B cell (primary cell): ENCODE measurements at regions of chr4 and their contacts with region 1.

Region 1: GRCh38 chr4:163611784-163612445 is 117.4 kb downstream of the TMA16 start:
- DNase-seq: no peak
- ATAC-seq: peak; percentile 35
- H3K4me3 ChIP-seq: peak overlapping the region; percentile 74 to 96 (median 87)
- H3K4me3 Mint-ChIP-seq: peak overlapping the region; percentile 91
- H3K27ac ChIP-seq: peak overlapping the region; percentile 80 to 88
- H3K27ac Mint-ChIP-seq: peak overlapping the region; percentile 87
- H3K4me1 ChIP-seq: peaks cover 39 to 42% of the 10 kb centered on the region in 2 donors
- H3K4me1 Mint-ChIP-seq: peaks cover 50% of the 10 kb centered on the region
- H3K27me3 ChIP-seq: no peaks in the 10 kb centered on the region
- H3K27me3 Mint-ChIP-seq: no peaks in the 10 kb centered on the region
- CTCF ChIP-seq: no peak

Region 2: DNA sequence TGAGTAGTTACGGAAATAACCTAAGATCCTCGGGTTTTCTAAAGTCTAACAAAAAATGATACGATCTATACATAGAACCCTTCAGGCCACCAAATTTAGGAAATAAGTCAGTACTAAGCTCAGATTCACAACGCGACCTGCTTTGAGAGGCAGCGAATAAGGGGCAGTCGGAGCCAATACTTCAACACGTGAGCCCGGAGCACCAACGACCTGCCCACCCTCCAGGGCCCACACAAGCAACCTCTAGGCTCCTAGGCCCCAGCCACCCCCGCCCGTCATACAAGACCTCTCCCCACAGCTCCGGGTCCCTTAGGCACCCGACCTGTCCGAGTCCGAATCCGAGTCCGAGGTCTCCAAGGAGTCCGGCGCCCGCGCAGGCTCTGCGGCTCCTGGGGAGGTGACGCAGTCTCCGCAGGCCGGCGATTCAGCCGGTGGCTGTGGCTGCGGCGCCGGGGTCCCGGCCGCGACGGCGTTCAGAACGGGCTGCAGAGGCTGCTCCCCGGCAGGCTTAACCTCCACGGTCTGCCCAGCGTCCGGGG is 445.8 kb before region 1 on chr4:
- CTCF ChIA-PET with region 1: no interaction called
- POLR2A ChIA-PET with region 1: no interaction called
- intact Hi-C with region 1: loop called (anchors 10 kb)
- DNase-seq: peak; percentile 78
- ATAC-seq: peak; percentile 56
- H3K4me3 ChIP-seq: peak overlapping the region; percentile 73 to 86 (median 83)
- H3K4me3 Mint-ChIP-seq: peak overlapping the region; percentile 97
- H3K27ac ChIP-seq: peak overlapping the region; percentile 91 to 94
- H3K27ac Mint-ChIP-seq: peak overlapping the region; percentile 98
- H3K4me1 ChIP-seq: peaks cover 15 to 18% of the 10 kb centered on the region in 2 donors
- H3K4me1 Mint-ChIP-seq: peaks cover 39% of the 10 kb centered on the region
- H3K27me3 ChIP-seq: no peaks in the 10 kb centered on the region
- H3K27me3 Mint-ChIP-seq: no peaks in the 10 kb centered on the region
- CTCF ChIP-seq: no peak

Region 3: DNA sequence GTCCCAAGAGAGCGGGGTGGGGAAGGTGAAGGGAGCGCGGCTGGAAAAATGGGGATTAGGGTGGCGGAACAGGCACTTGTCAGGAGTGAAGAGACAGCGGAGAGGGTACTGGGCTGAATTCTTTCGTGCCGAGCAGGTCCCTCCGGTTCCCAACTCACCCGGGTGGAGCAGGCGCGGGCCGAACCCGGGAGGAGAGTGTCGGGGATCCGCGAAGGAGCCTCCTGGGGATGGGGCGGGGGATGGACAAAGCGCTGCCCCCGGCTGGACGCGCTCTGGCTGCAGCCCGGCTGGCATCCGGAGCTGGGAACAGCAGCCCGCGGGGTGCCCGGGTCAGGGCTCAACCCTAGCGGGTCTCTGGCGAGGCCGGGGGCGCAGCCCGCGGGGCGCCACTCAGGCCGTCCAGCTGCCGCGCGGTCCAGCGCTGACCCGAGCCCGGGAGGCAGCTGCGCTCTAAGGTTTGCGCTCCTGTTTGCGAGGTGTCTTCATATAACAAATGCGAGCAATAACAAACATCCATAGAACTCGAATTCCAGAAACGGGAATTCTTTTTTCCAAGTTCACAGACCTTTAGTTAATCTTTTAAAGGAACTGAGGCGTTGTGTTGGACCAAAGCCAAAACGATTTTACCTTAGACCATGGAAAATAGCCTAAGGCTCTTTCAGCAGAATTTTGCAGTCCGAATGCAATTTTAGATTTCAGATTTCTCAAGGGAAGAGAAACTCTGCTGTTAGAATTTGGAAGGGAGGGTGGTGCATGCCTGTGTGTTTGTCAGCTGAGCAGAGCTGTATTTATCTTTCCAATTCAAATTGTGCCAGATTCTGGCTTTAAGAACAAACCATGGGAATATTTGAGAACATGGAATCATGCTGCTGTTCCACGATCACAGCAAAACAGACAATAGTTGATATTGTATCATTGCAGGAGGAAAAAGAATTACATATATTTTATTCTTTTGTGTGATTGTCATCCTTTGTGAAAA is 267.5 kb before region 1 on chr4:
- CTCF ChIA-PET with region 1: no interaction called
- POLR2A ChIA-PET with region 1: no interaction called
- intact Hi-C with region 1: no loop called
- DNase-seq: no peak
- ATAC-seq: no peak
- H3K4me3 ChIP-seq: no peak overlapping the region
- H3K4me3 Mint-ChIP-seq: no peak overlapping the region
- H3K27ac ChIP-seq: no peak overlapping the region
- H3K27ac Mint-ChIP-seq: no peak overlapping the region
- H3K4me1 ChIP-seq: peaks cover 0 to 8% of the 10 kb centered on the region in 2 donors
- H3K4me1 Mint-ChIP-seq: peaks cover 7% of the 10 kb centered on the region
- H3K27me3 ChIP-seq: peaks cover 0 to 17% (median 11%) of the 10 kb centered on the region in 4 experiments
- H3K27me3 Mint-ChIP-seq: peaks cover 40% of the 10 kb centered on the region
- CTCF ChIP-seq: no peak

Region 4: DNA sequence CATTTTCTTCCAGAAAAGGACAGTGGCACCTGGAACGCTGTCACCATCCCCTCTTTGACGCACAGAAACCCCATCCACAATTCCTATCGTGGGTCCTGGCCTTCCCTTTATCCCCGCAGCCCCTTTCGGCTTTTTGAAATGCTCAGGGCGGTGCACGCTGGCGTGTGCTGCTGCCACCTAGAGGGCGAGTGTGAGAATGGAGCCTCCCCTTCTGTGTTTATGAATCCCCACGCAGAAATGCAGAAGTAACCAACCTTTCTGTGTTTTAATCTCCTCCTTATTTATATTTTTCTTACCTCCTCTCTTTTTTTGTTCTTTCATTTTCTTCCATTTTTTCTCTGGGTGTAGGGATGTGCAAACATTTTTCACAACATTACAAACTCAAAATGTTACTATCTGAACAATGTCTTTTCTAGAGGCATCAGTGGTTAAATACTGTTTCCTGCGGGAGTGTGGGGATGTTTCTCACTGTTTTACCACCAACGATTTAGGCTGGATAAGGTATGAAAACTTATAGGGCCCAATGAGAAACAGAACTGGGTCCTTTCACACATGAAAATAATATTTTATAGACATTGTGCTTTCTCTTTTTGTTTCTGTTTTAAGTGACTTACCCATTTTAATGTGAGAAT is 67.4 kb before region 1 on chr4:
- CTCF ChIA-PET with region 1: interaction called, 94 read pairs
- POLR2A ChIA-PET with region 1: no interaction called
- intact Hi-C with region 1: no loop called
- DNase-seq: peak; percentile 84
- ATAC-seq: peak; percentile 88
- H3K4me3 ChIP-seq: no peak overlapping the region
- H3K4me3 Mint-ChIP-seq: no peak overlapping the region
- H3K27ac ChIP-seq: peak overlapping the region; percentile 17 to 58
- H3K27ac Mint-ChIP-seq: no peak overlapping the region
- H3K4me1 ChIP-seq: peaks cover 27 to 28% of the 10 kb centered on the region in 2 donors
- H3K4me1 Mint-ChIP-seq: peaks cover 23% of the 10 kb centered on the region
- H3K27me3 ChIP-seq: no peaks in the 10 kb centered on the region
- H3K27me3 Mint-ChIP-seq: no peaks in the 10 kb centered on the region
- CTCF ChIP-seq: peak; percentile 95

Region 5: DNA sequence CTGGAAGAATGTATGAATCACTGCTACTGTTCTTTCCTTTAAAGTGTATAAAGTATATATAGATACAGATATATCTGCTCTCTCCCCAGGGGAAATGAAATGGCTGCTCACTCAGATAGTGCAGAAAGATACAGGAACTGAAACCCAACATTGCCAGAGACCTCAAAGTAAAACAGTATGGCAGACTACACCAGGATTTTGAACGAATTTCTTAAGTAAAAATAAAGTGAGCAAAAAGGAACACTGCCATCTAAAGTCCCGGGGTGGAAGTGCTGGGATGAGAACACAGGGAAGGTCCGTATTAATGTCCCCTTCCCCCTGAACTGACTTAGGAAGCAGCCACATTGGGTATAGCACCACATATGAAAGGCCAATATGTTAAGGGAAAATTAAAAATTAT is 24.0 kb before region 1 on chr4:
- CTCF ChIA-PET with region 1: interaction called, 31 read pairs
- POLR2A ChIA-PET with region 1: interaction called, 7 read pairs
- intact Hi-C with region 1: loop called (anchors 1 kb)
- DNase-seq: peak; percentile 85
- ATAC-seq: peak; percentile 81
- H3K4me3 ChIP-seq: peak overlapping the region in 1 of 5 experiments; percentile 37
- H3K4me3 Mint-ChIP-seq: peak overlapping the region; percentile 55
- H3K27ac ChIP-seq: peak overlapping the region; percentile 35 to 56
- H3K27ac Mint-ChIP-seq: peak overlapping the region; percentile 83
- H3K4me1 ChIP-seq: peaks cover 63 to 66% of the 10 kb centered on the region in 2 donors
- H3K4me1 Mint-ChIP-seq: peaks cover 69% of the 10 kb centered on the region
- H3K27me3 ChIP-seq: no peaks in the 10 kb centered on the region
- H3K27me3 Mint-ChIP-seq: no peaks in the 10 kb centered on the region
- CTCF ChIP-seq: peak; percentile 85

Region 6: DNA sequence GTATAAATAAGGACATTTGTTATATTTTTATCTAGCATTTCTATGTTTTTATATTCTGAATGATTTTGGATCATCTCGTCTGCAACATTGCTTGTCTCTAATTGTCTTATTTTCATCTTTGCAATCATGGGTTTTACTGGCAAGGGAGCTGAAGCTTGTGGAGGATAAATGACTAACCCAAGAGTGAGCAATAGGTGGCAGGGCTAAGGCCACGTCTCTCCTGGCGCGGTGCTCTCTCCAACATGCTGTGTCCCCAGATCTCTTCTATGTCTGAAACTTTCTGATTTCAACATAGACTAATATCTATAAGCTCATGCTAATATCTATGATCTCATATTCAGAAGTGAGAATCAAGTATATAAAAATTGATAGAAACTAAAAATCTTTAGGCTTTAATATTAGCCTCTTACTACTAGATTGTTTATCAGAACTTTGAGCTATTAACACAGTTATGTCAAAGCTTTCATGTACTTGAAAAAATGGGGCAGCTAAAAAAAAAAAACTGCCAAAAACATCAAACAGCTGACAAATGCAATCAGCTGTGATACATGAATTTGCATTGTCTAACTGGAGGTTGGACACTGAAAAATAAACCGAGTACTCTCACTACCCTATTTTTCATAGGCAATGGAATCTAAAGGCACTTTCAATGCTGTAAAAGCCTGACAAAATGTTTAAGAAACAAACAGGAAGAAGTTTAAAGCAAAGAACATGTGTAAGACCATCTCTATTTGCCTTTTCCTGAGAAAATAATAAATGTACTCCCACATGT is 51.7 kb after region 1 on chr4:
- CTCF ChIA-PET with region 1: interaction called, 82 read pairs
- POLR2A ChIA-PET with region 1: interaction called, 39 read pairs
- intact Hi-C with region 1: loop called (anchors 1 kb)
- DNase-seq: peak; percentile 84
- ATAC-seq: peak; percentile 71
- H3K4me3 ChIP-seq: peak overlapping the region in 3 of 5 experiments; percentile 6 to 48 (median 32)
- H3K4me3 Mint-ChIP-seq: peak overlapping the region; percentile 84
- H3K27ac ChIP-seq: peak overlapping the region; percentile 93 to 94
- H3K27ac Mint-ChIP-seq: peak overlapping the region; percentile 98
- H3K4me1 ChIP-seq: peaks cover 69 to 72% of the 10 kb centered on the region in 2 donors
- H3K4me1 Mint-ChIP-seq: peaks cover 75% of the 10 kb centered on the region
- H3K27me3 ChIP-seq: no peaks in the 10 kb centered on the region
- H3K27me3 Mint-ChIP-seq: no peaks in the 10 kb centered on the region
- CTCF ChIP-seq: no peak

Region 7: GRCh38 chr4:163755013-163755412 is 143.1 kb after region 1 on chr4:
- CTCF ChIA-PET with region 1: interaction called, 4 read pairs
- POLR2A ChIA-PET with region 1: no interaction called
- intact Hi-C with region 1: loop called (anchors 10 kb)
- DNase-seq: peak; percentile 56
- ATAC-seq: peak; percentile 54
- H3K4me3 ChIP-seq: peak overlapping the region in 1 of 5 experiments; percentile 8
- H3K4me3 Mint-ChIP-seq: peak overlapping the region; percentile 64
- H3K27ac ChIP-seq: no peak overlapping the region
- H3K27ac Mint-ChIP-seq: no peak overlapping the region
- H3K4me1 ChIP-seq: peaks cover 5 to 6% of the 10 kb centered on the region in 2 donors
- H3K4me1 Mint-ChIP-seq: peaks cover 5% of the 10 kb centered on the region
- H3K27me3 ChIP-seq: no peaks in the 10 kb centered on the region
- H3K27me3 Mint-ChIP-seq: no peaks in the 10 kb centered on the region
- CTCF ChIP-seq: peak; percentile 74

Region 8: DNA sequence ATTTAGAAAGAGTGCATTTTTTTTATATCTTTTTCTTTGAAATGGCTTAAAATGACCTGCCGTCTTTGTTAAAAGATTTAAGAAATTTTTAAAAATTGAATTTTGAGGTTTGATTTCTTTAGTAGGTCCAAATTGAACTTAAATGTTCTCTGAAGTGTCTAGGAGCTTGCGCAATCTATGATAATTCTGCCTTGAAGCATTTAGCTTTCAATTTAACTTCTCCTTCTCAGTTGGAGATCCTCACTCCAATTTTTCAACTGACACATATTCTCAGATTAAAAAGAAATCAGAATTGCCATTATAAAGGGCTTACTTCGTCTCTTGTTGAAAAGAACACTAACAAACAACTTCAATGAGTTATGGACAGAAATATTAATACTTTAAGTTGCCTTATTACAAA is 156.1 kb after region 1 on chr4:
- CTCF ChIA-PET with region 1: no interaction called
- POLR2A ChIA-PET with region 1: no interaction called
- intact Hi-C with region 1: no loop called
- DNase-seq: no peak
- ATAC-seq: no peak
- H3K4me3 ChIP-seq: no peak overlapping the region
- H3K4me3 Mint-ChIP-seq: no peak overlapping the region
- H3K27ac ChIP-seq: no peak overlapping the region
- H3K27ac Mint-ChIP-seq: no peak overlapping the region
- H3K4me1 ChIP-seq: no peaks in the 10 kb centered on the region
- H3K4me1 Mint-ChIP-seq: no peaks in the 10 kb centered on the region
- H3K27me3 ChIP-seq: peaks cover 0 to 18% (median 2%) of the 10 kb centered on the region in 4 experiments
- H3K27me3 Mint-ChIP-seq: peaks cover 14% of the 10 kb centered on the region
- CTCF ChIP-seq: no peak